K562 (cell line): ENCODE measurements at regions of chr17 and their contacts with region 1.

Region 1: GRCh38 chr17:50397111-50397918 is at the start of gene LRRC59:
- DNase-seq: peak; percentile 89 to 93 (median 90)
- ATAC-seq: peak; percentile 94
- H3K4me3 ChIP-seq: peak within 1 kb of the TSS; percentile 87
- H3K27ac ChIP-seq: peak within 1 kb of the TSS; percentile 93
- H3K4me1 ChIP-seq: peaks cover 21 to 29% of the 10 kb centered on the region in 2 experiments; a peak in 4 of 5 replicates
- H3K27me3 ChIP-seq: no peaks in the 10 kb centered on the region
- CTCF ChIP-seq: peak; percentile 92 to 97 (median 95)
- EP300 ChIP-seq: peak; percentile 16; the same call in 1 of the 2 replicates
- POLR2A ChIP-seq: peak; percentile 92
- RAD21 ChIP-seq: peak; percentile 42 to 48
- polyA plus RNA-seq, gene LRRC59: 27.8 to 38.7 TPM

Region 2: DNA sequence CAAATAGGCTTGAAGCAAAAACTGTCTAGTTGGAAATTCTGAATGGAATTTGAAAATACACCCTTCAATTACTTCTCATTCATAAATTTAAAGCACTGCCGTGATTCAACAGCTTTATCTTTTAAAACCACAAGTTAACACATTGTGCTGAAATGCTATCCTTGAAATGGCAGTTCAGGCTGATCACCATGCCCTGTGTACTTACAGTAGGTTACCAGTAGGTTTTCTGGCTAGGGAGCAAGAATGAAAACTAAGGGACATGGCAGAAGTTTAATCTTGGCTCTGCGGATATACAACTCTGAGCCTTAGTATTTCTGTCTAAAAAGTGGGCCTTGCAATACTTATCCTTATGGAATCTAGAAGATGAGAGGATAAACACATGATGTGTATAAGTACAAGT is 793.6 kb before region 1 on chr17:
- CTCF ChIA-PET with region 1: no interaction called
- POLR2A ChIA-PET with region 1: no interaction called
- in situ Hi-C with region 1: no loop called
- intact Hi-C with region 1: no loop called
- DNase-seq: no peak
- ATAC-seq: no peak
- H3K4me3 ChIP-seq: no peak overlapping the region
- H3K27ac ChIP-seq: no peak overlapping the region
- H3K4me1 ChIP-seq: no peaks in the 10 kb centered on the region
- H3K27me3 ChIP-seq: no peaks in the 10 kb centered on the region
- CTCF ChIP-seq: no peak
- EP300 ChIP-seq: no peak
- POLR2A ChIP-seq: no peak
- RAD21 ChIP-seq: no peak

Region 3: DNA sequence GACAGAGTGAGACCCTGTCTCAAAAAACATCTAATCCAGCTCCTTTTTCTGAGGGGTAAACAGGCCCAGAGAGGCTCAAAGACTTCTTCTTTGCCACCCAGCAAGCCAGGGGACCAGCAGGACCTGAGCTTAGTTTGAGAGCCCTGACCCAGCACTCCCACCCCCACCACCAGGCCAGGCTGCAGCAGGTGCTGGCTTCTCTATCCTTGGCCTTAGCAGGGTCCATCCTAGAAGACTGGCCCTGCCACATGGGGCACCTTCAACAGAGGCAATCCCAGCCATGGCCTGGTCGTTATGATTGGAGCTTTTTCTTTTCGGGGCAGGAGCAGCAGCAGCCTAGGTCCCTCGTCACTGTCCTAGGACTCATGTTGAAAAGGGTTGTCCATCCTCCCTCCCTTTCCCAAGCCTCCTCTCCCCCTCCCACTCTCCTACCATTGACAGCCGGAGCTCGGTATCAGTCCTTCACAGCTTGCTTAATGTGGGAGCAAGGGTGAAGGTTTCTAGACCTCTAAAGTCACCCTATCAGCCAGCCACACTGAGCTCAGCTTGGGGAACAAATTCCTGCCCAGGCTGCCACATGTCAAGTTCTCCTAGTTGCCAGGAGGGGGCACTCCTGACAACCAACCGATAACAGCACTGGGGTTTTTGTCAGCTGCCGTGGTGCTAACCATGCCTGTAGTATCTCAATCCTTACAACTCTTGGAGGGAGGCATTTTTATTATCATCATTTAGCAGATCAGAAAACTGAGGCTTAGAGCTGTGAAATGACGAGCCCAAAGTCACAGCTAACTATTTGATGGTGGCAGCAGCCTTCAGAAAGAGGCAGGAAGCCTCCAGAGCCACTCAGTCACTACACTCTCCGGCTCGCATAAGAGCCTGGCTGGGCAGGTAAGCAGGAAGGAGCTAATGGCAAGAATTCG is 35.5 kb before region 1 on chr17:
- CTCF ChIA-PET with region 1: no interaction called
- POLR2A ChIA-PET with region 1: interaction called, 11 read pairs
- in situ Hi-C with region 1: no loop called
- intact Hi-C with region 1: no loop called
- DNase-seq: peak; percentile 86 to 95 (median 91)
- ATAC-seq: peak; percentile 89
- H3K4me3 ChIP-seq: no peak overlapping the region
- H3K27ac ChIP-seq: peak overlapping the region; percentile 62
- H3K4me1 ChIP-seq: peaks cover 17 to 33% of the 10 kb centered on the region in 2 experiments
- H3K27me3 ChIP-seq: no peaks in the 10 kb centered on the region
- CTCF ChIP-seq: peak; percentile 83 to 93 (median 89)
- EP300 ChIP-seq: peak; percentile 75; the same call in 1 of the 2 replicates
- POLR2A ChIP-seq: 0 out of 2 replicates have a peak, but pooled peaks have one; percentile 36
- RAD21 ChIP-seq: peak; percentile 70 to 72

Region 4: GRCh38 chr17:50380369-50381259 is 16.7 kb before region 1 on chr17:
- CTCF ChIA-PET with region 1: no interaction called
- POLR2A ChIA-PET with region 1: interaction called, 129 read pairs
- in situ Hi-C with region 1: no loop called
- intact Hi-C with region 1: no loop called
- DNase-seq: no peak
- ATAC-seq: peak; percentile 39
- H3K4me3 ChIP-seq: no peak overlapping the region
- H3K27ac ChIP-seq: no peak overlapping the region
- H3K4me1 ChIP-seq: peaks cover 0 to 4% of the 10 kb centered on the region in 2 experiments; a peak in 2 of 5 replicates
- H3K27me3 ChIP-seq: no peaks in the 10 kb centered on the region
- CTCF ChIP-seq: peak in 2 of 3 experiments; percentile 17 to 24; a peak in 1 of 6 replicates
- EP300 ChIP-seq: no peak
- POLR2A ChIP-seq: peak; percentile 71
- RAD21 ChIP-seq: no peak

Region 5: GRCh38 chr17:50425682-50426471 is 28.6 kb after region 1 on chr17 and contains the start of gene ACSF2:
- CTCF ChIA-PET with region 1: no interaction called
- POLR2A ChIA-PET with region 1: interaction called, 5 read pairs
- in situ Hi-C with region 1: no loop called
- intact Hi-C with region 1: loop called (anchors 2 kb)
- DNase-seq: peak; percentile 78 to 93 (median 90)
- ATAC-seq: peak; percentile 90
- H3K4me3 ChIP-seq: peak within 1 kb of the TSS; percentile 64
- H3K27ac ChIP-seq: peak within 1 kb of the TSS; percentile 26; the same call in 2 of the 3 replicates
- H3K4me1 ChIP-seq: peaks cover 34 to 36% of the 10 kb centered on the region in 2 experiments
- H3K27me3 ChIP-seq: no peaks in the 10 kb centered on the region
- CTCF ChIP-seq: no peak
- EP300 ChIP-seq: no peak
- POLR2A ChIP-seq: no peak; the same call in 1 of the 2 replicates
- RAD21 ChIP-seq: no peak
- polyA plus RNA-seq, gene ACSF2: 0.89 to 1.5 TPM